K562 (cell line): ENCODE measurements at regions of chr2 and their contacts with region 1.

Region 1: GRCh38 chr2:180980106-180980942 is at the start of gene UBE2E3:
- DNase-seq: peak; percentile 89 to 94 (median 92)
- ATAC-seq: peak; percentile 68
- H3K4me3 ChIP-seq: peak within 1 kb of the TSS; percentile 53
- H3K27ac ChIP-seq: peak within 1 kb of the TSS; percentile 78
- H3K4me1 ChIP-seq: peaks cover 8 to 25% of the 10 kb centered on the region in 2 experiments; a peak in 4 of 5 replicates
- H3K27me3 ChIP-seq: no peaks in the 10 kb centered on the region
- CTCF ChIP-seq: peak; percentile 52 to 74 (median 72)
- EP300 ChIP-seq: no peak
- POLR2A ChIP-seq: peak; percentile 66
- RAD21 ChIP-seq: peak; percentile 45 to 57
- polyA plus RNA-seq, gene UBE2E3: 84.8 to 97.1 TPM

Region 2: DNA sequence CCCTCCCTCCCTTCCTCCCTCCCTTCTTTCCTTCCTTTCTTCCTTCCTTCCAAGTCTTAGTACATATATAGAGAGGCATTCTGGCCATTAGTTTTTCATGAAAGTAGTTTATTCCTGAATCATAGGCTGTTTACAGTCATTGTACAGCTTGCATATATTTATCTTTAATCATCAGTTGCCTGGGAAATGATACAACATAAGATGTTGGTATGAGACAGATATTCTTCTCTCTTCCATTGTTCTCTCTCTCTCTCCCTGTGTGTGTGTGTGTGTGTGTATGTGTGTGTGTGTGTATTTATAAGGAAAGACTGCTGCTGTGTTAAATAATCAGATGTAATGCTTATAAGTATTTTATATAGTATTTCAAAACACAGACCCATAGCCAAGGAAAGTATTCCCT is 289.7 kb before region 1 on chr2:
- CTCF ChIA-PET with region 1: no interaction called
- POLR2A ChIA-PET with region 1: interaction called, 4 read pairs
- in situ Hi-C with region 1: no loop called
- intact Hi-C with region 1: loop called (anchors 5 kb)
- DNase-seq: no peak
- ATAC-seq: no peak
- H3K4me3 ChIP-seq: 0 out of 2 replicates have a peak overlapping the region, but pooled peaks have one; percentile 34
- H3K27ac ChIP-seq: no peak overlapping the region
- H3K4me1 ChIP-seq: peaks cover 0 to 6% of the 10 kb centered on the region in 2 experiments; a peak in 1 of 5 replicates
- H3K27me3 ChIP-seq: no peaks in the 10 kb centered on the region
- CTCF ChIP-seq: no peak
- EP300 ChIP-seq: no peak
- POLR2A ChIP-seq: no peak
- RAD21 ChIP-seq: no peak

Region 3: DNA sequence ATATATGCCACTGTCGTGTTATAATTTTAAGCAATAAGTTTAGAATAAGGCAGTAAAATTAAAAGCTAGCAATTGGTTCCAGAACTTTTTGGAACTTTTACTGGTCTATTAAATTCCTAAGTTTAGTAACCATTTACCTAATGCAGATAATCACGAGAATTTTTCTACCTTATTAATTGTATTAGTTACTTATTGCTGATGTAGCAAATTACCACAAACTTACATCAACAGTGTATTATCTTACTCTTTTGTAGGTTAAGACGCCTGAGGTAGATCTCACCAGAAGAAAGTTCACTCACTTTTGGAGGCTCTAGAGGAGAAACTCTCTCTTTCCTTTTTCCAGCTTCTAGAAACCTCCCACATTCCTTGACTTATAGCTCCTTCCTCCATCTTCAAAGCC is 13.9 kb before region 1 on chr2:
- CTCF ChIA-PET with region 1: no interaction called
- POLR2A ChIA-PET with region 1: interaction called, 34 read pairs
- in situ Hi-C with region 1: no loop called
- intact Hi-C with region 1: no loop called
- DNase-seq: no peak
- ATAC-seq: no peak
- H3K4me3 ChIP-seq: no peak overlapping the region
- H3K27ac ChIP-seq: no peak overlapping the region
- H3K4me1 ChIP-seq: no peaks in the 10 kb centered on the region
- H3K27me3 ChIP-seq: no peaks in the 10 kb centered on the region
- CTCF ChIP-seq: no peak
- EP300 ChIP-seq: no peak
- POLR2A ChIP-seq: no peak
- RAD21 ChIP-seq: no peak

Region 4: GRCh38 chr2:180991820-180992219 is 11.5 kb after region 1 on chr2:
- CTCF ChIA-PET with region 1: no interaction called
- POLR2A ChIA-PET with region 1: interaction called, 38 read pairs
- in situ Hi-C with region 1: no loop called
- intact Hi-C with region 1: no loop called
- DNase-seq: no peak
- ATAC-seq: peak; percentile 36
- H3K4me3 ChIP-seq: no peak overlapping the region
- H3K27ac ChIP-seq: no peak overlapping the region
- H3K4me1 ChIP-seq: no peaks in the 10 kb centered on the region
- H3K27me3 ChIP-seq: no peaks in the 10 kb centered on the region
- CTCF ChIP-seq: no peak
- EP300 ChIP-seq: no peak
- POLR2A ChIP-seq: no peak
- RAD21 ChIP-seq: no peak

Region 5: GRCh38 chr2:181058378-181059269 is 78.3 kb after region 1 on chr2:
- CTCF ChIA-PET with region 1: no interaction called
- POLR2A ChIA-PET with region 1: no interaction called
- in situ Hi-C with region 1: no loop called
- intact Hi-C with region 1: loop called (anchors 2 kb)
- DNase-seq: peak; percentile 43 to 55 (median 50)
- ATAC-seq: peak; percentile 89
- H3K4me3 ChIP-seq: no peak overlapping the region
- H3K27ac ChIP-seq: no peak overlapping the region
- H3K4me1 ChIP-seq: no peaks in the 10 kb centered on the region
- H3K27me3 ChIP-seq: no peaks in the 10 kb centered on the region
- CTCF ChIP-seq: peak; percentile 48 to 86 (median 74); a peak in 5 of 6 replicates
- EP300 ChIP-seq: no peak
- POLR2A ChIP-seq: no peak
- RAD21 ChIP-seq: peak; percentile 93

Region 6: GRCh38 chr2:181891258-181891965 is 911.1 kb after region 1 on chr2 and contains the start of gene ITPRID2:
- CTCF ChIA-PET with region 1: no interaction called
- POLR2A ChIA-PET with region 1: no interaction called
- in situ Hi-C with region 1: no loop called
- intact Hi-C with region 1: loop called (anchors 10 kb)
- DNase-seq: peak; percentile 95 to 97 (median 95)
- ATAC-seq: peak; percentile 94
- H3K4me3 ChIP-seq: peak within 1 kb of the TSS; percentile 88
- H3K27ac ChIP-seq: peak within 1 kb of the TSS; percentile 96
- H3K4me1 ChIP-seq: peaks cover 7 to 23% of the 10 kb centered on the region in 2 experiments; a peak in 4 of 5 replicates
- H3K27me3 ChIP-seq: no peaks in the 10 kb centered on the region
- CTCF ChIP-seq: peak; percentile 7 to 9 (median 8); a peak in 2 of 6 replicates
- EP300 ChIP-seq: no peak; the same call in 1 of the 2 replicates
- POLR2A ChIP-seq: no peak; the same call in 1 of the 2 replicates
- RAD21 ChIP-seq: peak; percentile 24 to 30; a peak in 3 of 4 replicates
- polyA plus RNA-seq, gene ITPRID2: 18.5 to 20.3 TPM